Mammary epithelial cell (primary cell): ENCODE measurements at regions of chr9 and their contacts with region 1.

Region 1: GRCh38 chr9:108834959-108835696 is 20.7 kb downstream of the ACTL7B start:
- DNase-seq: peak; percentile 75
- H3K4me3 ChIP-seq: no peak overlapping the region
- H3K27ac ChIP-seq: peak overlapping the region; percentile 87
- H3K4me1 ChIP-seq: peaks cover 65% of the 10 kb centered on the region
- H3K27me3 ChIP-seq: no peaks in the 10 kb centered on the region
- CTCF ChIP-seq: no peak

Region 2: DNA sequence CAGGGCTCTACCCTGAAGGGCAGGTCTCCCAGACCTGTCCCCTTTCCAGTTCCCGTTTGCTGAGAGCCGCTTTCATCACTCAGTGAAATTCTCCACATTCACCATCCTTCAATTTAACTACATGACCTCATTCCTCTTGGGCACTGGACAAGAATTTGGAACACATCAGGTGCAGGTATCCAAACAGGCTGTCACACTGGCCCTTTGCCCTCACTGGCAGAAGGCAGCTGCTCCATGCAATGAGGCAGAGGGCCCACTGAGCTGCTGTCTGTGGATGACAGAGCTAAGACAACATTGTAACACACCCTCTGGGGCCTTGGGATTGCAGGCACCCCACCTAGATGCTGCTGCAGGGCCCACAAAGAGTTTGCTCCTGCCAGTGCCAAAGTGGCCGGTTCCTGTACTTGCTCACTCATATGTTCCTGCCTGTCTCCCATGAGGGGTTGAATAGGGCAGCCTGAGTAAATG is 34.5 kb before region 1 on chr9:
- CTCF ChIA-PET with region 1: no interaction called
- dilution Hi-C with region 1: loop called (anchors 5 kb)
- in situ Hi-C with region 1: no loop called
- intact Hi-C with region 1: no loop called
- DNase-seq: no peak
- H3K4me3 ChIP-seq: no peak overlapping the region
- H3K27ac ChIP-seq: no peak overlapping the region
- H3K4me1 ChIP-seq: peaks cover 9% of the 10 kb centered on the region
- H3K27me3 ChIP-seq: no peaks in the 10 kb centered on the region
- CTCF ChIP-seq: no peak

Region 3: GRCh38 chr9:108928386-108928785 is 93.3 kb after region 1 on chr9:
- CTCF ChIA-PET with region 1: no interaction called
- dilution Hi-C with region 1: loop called (anchors 5 kb)
- in situ Hi-C with region 1: no loop called
- intact Hi-C with region 1: no loop called
- DNase-seq: no peak
- H3K4me3 ChIP-seq: no peak overlapping the region
- H3K27ac ChIP-seq: no peak overlapping the region
- H3K4me1 ChIP-seq: peaks cover 7% of the 10 kb centered on the region
- H3K27me3 ChIP-seq: no peaks in the 10 kb centered on the region
- CTCF ChIP-seq: no peak